PC-3 (cell line): ENCODE measurements at regions of chrX and their contacts with region 1.

Region 1: DNA sequence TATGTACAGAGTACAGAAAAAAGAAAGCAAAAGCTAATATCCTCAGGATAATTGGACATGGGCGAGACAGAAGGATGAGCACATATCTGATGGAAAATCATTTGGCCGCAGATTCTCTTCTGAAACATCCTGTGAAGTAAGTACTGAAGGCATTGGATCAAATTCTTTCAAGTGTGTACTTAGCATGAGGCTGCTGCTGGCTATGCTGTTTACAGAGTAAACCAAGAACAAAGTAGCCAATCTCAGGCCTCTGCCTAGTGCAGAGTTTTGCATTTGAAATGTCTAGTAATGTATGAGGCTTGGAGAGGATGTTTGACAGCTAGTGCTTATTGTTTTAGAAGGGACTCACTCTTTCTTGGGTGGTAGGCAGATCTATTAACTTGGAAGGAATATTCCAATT is 128.5 kb downstream of the MAGEC2 start:
- DNase-seq: peak; percentile 54
- ATAC-seq: peak; percentile 99
- H3K4me3 ChIP-seq: no peak overlapping the region
- H3K27ac ChIP-seq: no peak overlapping the region
- H3K4me1 ChIP-seq: peaks cover 9% of the 10 kb centered on the region; the same call in 1 of the 2 replicates
- H3K27me3 ChIP-seq: no peaks in the 10 kb centered on the region
- CTCF ChIP-seq: no peak

Region 2: DNA sequence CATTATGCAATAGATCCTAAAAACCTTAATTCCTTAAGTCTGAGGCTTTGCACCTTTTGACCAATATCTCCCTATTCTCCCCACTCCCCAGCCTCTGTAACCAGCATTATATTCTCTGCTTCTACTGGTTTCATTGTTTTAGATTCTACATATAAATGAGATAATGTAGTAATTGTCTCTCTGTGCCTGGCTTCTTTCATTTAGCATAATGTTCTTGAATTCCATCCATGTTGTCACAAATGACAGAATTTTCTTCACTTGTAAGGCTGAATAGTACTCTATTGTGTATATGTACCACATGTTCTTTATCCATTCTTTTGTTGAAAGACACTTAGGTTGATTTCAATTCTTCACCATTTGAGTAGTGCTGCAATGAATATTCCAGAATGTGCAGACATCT is 106.9 kb before region 1 on chrX:
- CTCF ChIA-PET with region 1: no interaction called
- POLR2A ChIA-PET with region 1: no interaction called
- intact Hi-C with region 1: loop called (anchors 10 kb)
- DNase-seq: no peak
- ATAC-seq: no peak
- H3K4me3 ChIP-seq: no peak overlapping the region
- H3K27ac ChIP-seq: no peak overlapping the region
- H3K4me1 ChIP-seq: no peaks in the 10 kb centered on the region
- H3K27me3 ChIP-seq: no peaks in the 10 kb centered on the region
- CTCF ChIP-seq: no peak

Region 3: DNA sequence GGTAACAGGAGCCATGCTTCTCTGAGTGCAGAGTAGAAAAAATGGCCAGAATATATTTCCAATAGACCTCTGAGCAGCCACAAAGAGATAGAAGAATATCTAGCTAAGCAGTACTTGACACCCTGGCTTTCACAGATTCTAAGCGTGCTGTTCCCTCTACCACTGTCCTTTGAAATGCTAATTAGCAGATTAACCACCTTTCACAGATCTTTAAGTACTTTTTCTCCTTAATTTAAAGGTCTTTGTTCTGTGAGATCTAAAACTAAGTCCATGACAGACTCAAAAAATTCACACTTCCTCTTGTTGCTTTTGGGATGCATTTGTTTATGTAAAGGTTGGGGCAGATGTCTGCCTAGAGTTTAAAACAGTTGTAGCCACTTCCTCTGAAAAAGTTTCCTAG is 156.8 kb after region 1 on chrX:
- CTCF ChIA-PET with region 1: no interaction called
- POLR2A ChIA-PET with region 1: no interaction called
- intact Hi-C with region 1: no loop called
- DNase-seq: no peak
- ATAC-seq: no peak
- H3K4me3 ChIP-seq: no peak overlapping the region
- H3K27ac ChIP-seq: no peak overlapping the region
- H3K4me1 ChIP-seq: no peaks in the 10 kb centered on the region
- H3K27me3 ChIP-seq: no peaks in the 10 kb centered on the region
- CTCF ChIP-seq: no peak